Right ventricle myocardium inferior (tissue), 1 donor: ENCODE measurements at regions of chr17 and their contacts with region 1.

Region 1: DNA sequence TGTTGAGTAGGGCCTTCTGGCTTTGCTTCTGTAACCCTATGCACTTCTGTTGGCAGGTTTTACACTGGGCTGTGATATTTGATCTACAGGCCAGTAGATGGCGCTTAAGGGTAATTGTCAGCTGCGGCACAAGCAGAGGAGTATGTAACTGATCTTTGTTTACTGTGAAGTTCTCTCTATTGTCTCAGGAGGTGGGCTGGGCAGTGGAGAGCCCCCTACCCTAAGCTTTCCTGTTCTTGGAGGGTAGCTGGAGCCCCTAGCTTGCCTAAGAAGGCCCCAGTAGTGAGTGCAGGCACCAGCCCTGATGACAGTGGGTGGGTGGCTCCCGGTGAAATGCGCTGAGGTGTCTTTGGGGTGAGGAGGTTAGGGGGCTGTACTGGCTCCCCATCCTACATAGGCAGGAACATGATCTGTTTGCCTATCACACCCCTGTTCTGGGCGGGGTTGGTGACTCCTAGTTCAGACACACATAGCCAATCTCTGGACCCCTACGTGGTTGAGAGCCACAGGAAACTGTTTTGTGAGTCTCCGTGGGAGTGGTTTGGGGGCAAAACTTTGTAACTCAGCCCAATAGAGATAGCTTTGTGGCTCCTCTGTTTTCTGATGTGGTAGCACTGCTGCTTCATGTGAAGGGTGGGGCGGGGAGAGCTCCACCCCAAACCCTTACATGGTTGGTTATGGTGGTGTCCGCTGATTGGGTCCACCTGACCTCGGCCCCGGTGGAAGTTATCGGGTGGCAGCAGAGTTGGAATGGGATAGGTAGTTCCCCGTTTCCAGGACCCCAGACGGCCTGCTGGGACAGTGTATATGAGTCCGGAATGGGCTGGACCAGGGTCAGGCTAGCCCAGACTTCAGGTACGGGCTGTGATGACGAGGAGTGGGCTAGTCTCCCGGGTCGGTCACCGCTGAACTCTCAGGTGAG is 60.4 kb downstream of the SLFN11 start:
- DNase-seq: peak; percentile 74
- ATAC-seq: peak; percentile 93

Region 2: DNA sequence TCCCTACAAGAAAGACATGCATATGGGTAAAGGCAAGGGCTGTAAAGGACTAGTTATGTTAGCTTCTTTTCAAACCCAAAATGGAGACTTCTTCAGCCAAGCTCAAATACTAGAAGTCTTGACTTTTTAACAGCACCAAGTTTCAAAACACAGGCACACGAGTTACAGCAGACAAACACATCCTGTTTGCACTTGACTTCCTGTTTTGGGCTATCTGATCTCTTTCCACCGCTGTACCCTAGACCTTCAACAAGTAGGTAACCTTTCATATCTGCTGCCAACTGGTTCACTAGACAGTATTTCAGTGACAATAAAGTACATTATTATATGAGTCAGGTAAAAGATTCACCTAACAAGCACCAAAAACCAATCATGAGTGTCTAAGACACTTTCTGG is 261.9 kb before region 1 on chr17:
- intact Hi-C with region 1: no loop called
- DNase-seq: no peak
- ATAC-seq: peak; percentile 28

Region 3: DNA sequence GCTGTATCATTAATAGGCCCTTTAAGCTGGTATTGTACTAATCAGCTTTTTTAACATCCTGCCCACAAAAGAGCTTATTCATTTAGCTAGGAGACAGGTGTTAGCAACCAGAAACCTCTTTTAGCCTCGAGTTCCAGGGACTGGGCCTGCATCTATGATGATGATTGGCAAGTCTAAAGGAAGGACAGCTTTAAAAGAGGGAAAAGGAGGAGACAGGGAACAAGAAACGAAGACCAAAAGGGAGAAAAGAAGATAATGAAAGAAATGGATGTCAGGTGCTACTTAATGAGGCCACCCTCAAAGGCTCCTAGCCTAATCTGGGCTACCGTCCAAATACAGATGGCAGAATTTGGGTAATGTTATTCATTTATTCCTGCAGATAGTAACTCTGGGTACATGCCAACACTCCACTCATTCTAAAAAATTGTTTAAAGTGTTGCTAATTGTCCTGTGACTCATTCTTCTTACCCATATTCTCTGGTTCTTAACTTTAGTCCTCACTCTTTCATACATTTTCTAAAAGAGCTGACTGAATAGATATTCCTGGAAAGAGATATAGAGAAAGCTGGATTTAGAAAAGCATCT is 230.9 kb before region 1 on chr17:
- intact Hi-C with region 1: no loop called
- DNase-seq: no peak
- ATAC-seq: no peak

Region 4: DNA sequence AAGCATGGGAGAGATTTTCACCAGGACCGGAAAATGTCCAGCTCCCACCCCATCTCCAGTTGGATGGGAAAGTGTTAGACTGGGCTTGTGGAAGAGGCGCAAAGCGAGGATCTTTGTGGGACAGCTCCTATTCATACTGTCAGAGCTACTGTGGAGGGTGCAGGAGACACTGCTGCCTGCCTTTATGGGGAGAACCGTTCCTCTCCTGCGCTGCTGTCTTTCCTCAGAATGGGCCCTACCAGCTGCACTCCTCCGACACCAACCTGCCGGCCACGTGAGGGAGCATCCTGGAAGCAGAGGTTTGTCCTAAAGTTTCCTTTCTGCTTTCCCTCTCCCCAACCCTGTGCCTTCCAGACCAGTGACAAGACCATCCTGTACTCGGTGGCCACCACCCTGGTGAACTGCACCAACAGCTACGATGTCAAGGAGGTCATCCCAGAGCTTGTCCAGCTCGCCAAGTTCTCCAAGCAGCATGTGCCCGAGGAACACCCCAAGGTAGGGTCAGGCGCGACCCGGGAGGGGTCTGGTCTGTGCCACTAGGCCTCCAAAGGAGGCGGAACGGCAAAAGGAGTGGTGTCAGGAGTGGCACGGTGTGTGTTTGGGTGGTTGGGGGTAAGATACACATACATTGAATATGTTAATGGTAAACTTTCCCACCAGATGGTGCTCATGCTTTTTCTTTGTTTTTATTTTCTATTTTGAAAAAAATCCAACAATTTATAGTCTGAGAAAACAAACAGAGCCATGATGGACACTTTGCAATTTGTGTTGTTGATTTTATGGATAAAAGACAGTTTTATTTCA is 141.9 kb before region 1 on chr17:
- intact Hi-C with region 1: loop called (anchors 2 kb)
- DNase-seq: no peak
- ATAC-seq: no peak

Region 5: GRCh38 chr17:35345926-35346771 is 33.1 kb after region 1 on chr17:
- intact Hi-C with region 1: loop called (anchors 1 kb)
- DNase-seq: peak; percentile 89
- ATAC-seq: peak; percentile 90

Region 6: DNA sequence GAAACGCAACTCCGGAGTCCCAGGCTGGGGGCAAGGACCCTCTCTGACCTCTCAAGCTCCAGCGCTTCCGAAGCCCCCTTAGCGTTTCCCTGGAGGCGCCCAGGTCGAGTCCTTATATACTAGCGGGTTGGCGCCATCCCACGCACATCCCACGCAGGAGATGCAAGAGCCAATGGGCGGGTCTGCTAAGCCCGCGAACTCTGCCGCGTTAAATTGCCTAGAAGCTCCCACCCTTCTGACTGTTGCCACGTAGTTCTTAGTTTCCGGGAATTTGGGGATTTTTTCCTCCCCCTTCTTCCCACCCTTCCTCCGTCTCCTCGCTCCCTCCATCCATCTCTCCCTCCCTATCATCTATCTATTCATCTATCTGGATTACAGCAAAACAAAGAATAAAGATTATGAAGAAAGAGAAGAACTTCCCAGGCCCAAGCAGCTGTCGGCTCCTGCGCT is 60.5 kb after region 1 on chr17 and contains the start of gene SLFN11:
- intact Hi-C with region 1: loop called (anchors 2 kb)
- DNase-seq: peak; percentile 92
- ATAC-seq: peak; percentile 95
- total RNA-seq, gene SLFN11: 18.1 TPM

Region 7: GRCh38 chr17:35390663-35391062 is 77.6 kb after region 1 on chr17:
- intact Hi-C with region 1: no loop called
- DNase-seq: no peak
- ATAC-seq: no peak

Region 8: DNA sequence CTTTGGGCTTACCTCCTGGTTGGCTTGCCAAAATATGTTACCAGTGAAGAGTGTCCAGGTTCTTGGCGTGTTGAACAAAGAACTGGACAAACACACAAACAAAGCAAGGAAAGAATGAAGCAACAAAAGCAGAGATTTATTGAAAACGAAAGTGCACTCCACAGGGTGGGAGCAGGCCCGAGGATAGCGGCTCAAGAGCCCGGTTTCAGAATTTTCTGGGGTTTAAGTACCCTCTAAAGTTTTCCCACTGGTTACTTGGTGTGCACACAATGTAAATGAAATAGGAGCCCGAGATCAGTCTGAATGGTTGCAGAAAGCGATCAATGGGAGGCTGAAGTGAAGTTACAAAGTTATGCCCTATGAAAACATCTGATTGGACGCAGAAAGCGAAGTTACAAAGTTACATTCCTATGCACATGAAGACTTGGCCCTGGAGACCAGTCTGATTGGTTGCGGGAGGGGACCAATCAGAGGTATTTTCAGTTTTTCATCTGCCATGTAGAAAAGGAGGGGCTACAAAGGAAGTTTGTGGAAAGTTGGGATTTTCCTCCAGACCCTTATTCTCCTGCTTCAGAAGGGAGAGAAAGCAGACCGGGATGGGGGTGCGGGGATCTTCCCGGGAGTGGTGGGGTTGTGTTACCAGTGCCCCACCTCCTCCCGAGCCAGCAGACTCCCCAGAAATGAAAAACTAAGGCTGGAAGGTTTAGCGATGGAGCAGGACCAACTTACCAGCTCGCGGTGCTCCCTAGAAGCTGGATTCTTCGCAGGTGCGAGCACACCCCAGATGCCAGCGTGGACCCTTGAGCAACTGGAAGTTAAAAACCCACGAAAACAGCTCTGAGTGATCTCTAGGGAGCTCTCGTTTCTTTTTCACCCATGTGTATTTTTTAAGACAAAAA is 119.4 kb after region 1 on chr17 and contains the start of gene SLFN12:
- intact Hi-C with region 1: loop called (anchors 5 kb)
- DNase-seq: no peak
- ATAC-seq: peak; percentile 90
- total RNA-seq, gene SLFN12: 3.0 TPM

Region 9: DNA sequence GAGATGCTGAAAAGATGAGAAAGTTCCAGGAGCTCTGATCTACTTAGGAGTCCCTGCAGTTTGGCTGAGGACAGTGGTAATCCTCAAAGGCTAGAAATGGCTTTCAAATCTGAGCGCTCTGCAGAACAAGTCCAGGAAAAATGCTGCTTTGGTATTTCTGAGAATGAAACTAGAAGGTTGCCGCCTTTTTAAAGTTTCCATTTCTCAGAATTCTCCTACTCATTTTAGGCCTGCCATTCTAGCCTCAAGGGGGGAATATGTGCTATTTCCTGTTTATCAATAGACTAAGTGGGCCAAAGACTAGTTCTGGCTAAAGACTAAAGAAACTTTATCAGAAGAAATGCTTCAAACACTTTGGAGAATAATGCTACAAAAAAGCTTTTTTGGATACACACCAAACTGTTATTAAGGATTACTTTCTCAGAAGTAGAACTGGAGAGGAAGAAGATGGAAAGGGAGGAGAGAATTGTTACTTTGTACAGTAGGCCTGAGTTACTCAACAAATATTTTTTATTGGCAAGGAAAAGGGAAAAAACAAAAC is 224.6 kb after region 1 on chr17 and contains the start of gene SLFN12L:
- intact Hi-C with region 1: loop called (anchors 1 kb)
- DNase-seq: no peak
- ATAC-seq: peak; percentile 36
- total RNA-seq, gene SLFN12L: 0.32 TPM

Region 10: GRCh38 chr17:35747540-35748017 is 434.5 kb after region 1 on chr17:
- intact Hi-C with region 1: loop called (anchors 5 kb)
- DNase-seq: peak; percentile 74
- ATAC-seq: peak; percentile 83